ENCODE measurements at regions of chr7 and their contacts with region 1.

Region 1: DNA sequence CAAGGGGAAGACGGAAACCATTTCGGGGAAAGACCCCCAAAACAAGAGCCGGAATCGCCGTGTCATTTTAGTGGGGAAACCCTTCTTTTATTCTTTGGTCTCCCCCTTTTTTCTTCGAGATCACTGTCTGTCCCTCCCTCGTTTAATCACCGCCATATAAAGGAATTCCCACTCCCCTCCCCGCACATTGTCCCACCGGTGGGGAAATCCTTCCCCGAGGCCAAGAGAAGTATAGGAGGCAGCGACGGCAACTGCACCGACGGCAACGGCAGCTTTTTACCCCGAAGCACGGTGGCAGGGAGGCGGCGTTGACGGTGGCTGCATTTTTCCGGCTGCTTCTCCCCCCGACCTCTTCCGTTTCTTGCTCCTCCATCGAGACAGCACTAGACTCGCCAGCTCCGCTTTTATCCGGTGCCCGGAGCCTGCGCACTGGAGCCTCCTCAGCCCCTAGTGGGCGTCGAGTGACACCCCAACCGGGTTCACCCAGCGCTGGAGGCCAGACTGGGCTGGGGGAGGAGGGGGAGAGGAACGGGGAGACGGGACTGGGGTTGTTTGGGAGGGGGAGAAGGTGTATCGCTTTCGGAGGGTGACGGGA is 687 bp upstream of the KMT2E start:
- DNase-seq: peak; percentile 95
- ATAC-seq: peak; percentile 57
- H3K4me3 ChIP-seq: peak overlapping the region; percentile 95 to 99 (median 97)
- H3K4me3 Mint-ChIP-seq: peak overlapping the region; percentile 99
- H3K27ac ChIP-seq: peak overlapping the region; percentile 100
- H3K27ac Mint-ChIP-seq: peak overlapping the region; percentile 100
- H3K4me1 ChIP-seq: peaks cover 33 to 52% of the 10 kb centered on the region in 2 donors
- H3K4me1 Mint-ChIP-seq: peaks cover 56% of the 10 kb centered on the region
- H3K27me3 ChIP-seq: no peaks in the 10 kb centered on the region
- H3K27me3 Mint-ChIP-seq: no peaks in the 10 kb centered on the region
- CTCF ChIP-seq: peak; percentile 59

Region 2: GRCh38 chr7:104908636-104909035 is 104.7 kb before region 1 on chr7:
- CTCF ChIA-PET with region 1: no interaction called
- POLR2A ChIA-PET with region 1: no interaction called
- intact Hi-C with region 1: no loop called
- DNase-seq: no peak
- ATAC-seq: no peak
- H3K4me3 ChIP-seq: no peak overlapping the region
- H3K4me3 Mint-ChIP-seq: no peak overlapping the region
- H3K27ac ChIP-seq: no peak overlapping the region
- H3K27ac Mint-ChIP-seq: no peak overlapping the region
- H3K4me1 ChIP-seq: no peaks in the 10 kb centered on the region
- H3K4me1 Mint-ChIP-seq: no peaks in the 10 kb centered on the region
- H3K27me3 ChIP-seq: peaks cover 0 to 5% (median 3%) of the 10 kb centered on the region in 4 experiments
- H3K27me3 Mint-ChIP-seq: peaks cover 12% of the 10 kb centered on the region
- CTCF ChIP-seq: no peak

Region 3: DNA sequence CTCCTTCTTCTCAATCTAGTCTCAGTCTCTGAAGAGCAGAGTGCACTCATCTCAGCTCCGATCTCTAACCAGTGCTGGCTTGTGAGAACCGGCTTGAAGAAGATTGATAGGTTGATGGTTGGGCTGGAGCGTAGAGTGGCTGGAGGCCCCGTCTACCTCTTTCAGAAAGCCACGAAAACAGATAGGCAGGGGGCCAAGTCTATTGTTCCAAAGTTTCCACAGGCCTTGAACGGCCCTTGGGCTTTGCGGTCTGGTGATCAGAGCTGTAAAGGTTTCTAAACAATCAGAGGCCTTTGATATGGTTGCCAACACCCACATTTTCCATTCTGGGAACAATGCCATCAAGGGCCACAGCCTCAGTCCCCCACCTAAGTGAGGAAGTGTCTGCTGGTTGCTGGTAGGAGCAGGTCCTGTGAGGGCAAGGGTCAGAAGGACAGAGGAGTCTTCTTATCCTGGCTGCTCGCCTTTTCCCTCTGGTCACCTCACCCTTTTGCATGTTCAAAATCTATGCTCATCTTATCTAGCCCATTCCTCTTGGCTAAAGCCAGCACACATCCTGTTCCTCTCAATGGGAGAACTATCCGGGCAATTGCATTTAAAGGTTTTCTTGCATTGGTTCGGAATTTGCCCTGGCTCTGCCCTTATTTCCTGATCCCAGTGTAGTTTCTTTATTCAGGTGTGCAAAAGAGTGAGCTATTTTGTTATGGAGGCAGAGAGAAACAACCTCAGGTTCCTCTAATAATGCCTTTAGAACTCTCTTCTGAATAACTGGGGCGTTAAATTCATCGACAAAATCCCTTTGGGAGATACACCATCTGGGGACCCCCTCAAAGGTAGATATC is 69.6 kb before region 1 on chr7:
- CTCF ChIA-PET with region 1: interaction called, 5 read pairs
- POLR2A ChIA-PET with region 1: interaction called, 99 read pairs
- intact Hi-C with region 1: loop called (anchors 1 kb)
- DNase-seq: peak; percentile 73
- ATAC-seq: peak; percentile 18
- H3K4me3 ChIP-seq: peak overlapping the region; percentile 68 to 83 (median 76)
- H3K4me3 Mint-ChIP-seq: peak overlapping the region; percentile 93
- H3K27ac ChIP-seq: peak overlapping the region; percentile 99
- H3K27ac Mint-ChIP-seq: peak overlapping the region; percentile 100
- H3K4me1 ChIP-seq: peaks cover 66 to 78% of the 10 kb centered on the region in 2 donors
- H3K4me1 Mint-ChIP-seq: peaks cover 70% of the 10 kb centered on the region
- H3K27me3 ChIP-seq: no peaks in the 10 kb centered on the region
- H3K27me3 Mint-ChIP-seq: no peaks in the 10 kb centered on the region
- CTCF ChIP-seq: no peak

Region 4: DNA sequence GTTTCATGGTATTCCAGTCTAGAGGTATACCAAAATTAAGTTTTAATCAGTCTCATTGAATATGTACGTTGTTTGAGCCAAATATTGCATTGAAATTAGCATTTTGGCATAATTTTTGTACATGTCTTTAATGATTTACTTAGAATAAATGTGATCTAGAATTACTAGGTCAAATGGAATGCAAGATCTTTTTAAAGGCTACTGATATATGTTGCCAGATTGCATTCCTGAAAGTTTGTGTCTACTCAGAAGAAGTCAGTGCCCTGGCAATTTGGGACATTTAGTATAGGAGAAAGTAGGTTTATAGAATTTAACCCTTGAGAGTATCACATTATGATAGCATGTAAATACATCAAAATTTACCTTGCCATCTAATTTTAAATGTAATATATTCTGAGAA is 33.1 kb after region 1 on chr7:
- CTCF ChIA-PET with region 1: interaction called, 27 read pairs
- POLR2A ChIA-PET with region 1: interaction called, 5 read pairs
- intact Hi-C with region 1: no loop called
- DNase-seq: no peak
- ATAC-seq: no peak
- H3K4me3 ChIP-seq: no peak overlapping the region
- H3K4me3 Mint-ChIP-seq: no peak overlapping the region
- H3K27ac ChIP-seq: no peak overlapping the region
- H3K27ac Mint-ChIP-seq: no peak overlapping the region
- H3K4me1 ChIP-seq: peaks cover 5 to 6% of the 10 kb centered on the region in 2 donors
- H3K4me1 Mint-ChIP-seq: peaks cover 26% of the 10 kb centered on the region
- H3K27me3 ChIP-seq: no peaks in the 10 kb centered on the region
- H3K27me3 Mint-ChIP-seq: no peaks in the 10 kb centered on the region
- CTCF ChIP-seq: no peak

Region 5: DNA sequence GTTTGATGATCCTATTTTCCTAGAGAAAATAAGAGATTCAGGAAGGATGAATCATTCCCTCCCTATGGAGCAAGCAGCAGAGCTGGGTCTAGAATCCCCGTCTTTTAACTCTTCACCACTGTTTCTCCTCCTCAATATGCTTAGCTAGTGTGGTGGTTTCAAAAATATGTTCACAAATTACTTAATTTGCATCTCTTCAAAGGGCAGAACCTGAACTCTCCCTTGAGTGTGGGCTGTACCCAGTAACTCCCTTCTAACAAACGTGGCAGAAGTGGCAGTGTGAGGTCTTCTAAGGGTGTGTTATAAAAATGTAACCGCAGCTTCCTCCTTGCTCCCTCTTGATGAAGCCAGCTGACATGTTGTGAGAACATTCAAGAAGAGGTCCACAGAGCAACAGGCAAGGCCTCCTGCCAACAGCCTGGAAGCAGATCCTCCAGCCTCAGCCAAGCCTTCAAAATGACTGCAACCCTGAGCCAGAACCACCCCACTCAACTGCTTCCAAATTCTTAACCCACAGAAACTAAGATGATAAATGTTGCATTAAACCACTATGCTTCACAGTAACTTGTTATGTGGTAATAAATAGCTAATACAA is 338.8 kb after region 1 on chr7:
- CTCF ChIA-PET with region 1: no interaction called
- POLR2A ChIA-PET with region 1: interaction called, 7 read pairs
- intact Hi-C with region 1: loop called (anchors 5 kb)
- DNase-seq: peak; percentile 90
- ATAC-seq: peak; percentile 88
- H3K4me3 ChIP-seq: peak overlapping the region; percentile 0 to 41 (median 32)
- H3K4me3 Mint-ChIP-seq: peak overlapping the region; percentile 82
- H3K27ac ChIP-seq: peak overlapping the region; percentile 75 to 80
- H3K27ac Mint-ChIP-seq: peak overlapping the region; percentile 99
- H3K4me1 ChIP-seq: peaks cover 84 to 91% of the 10 kb centered on the region in 2 donors
- H3K4me1 Mint-ChIP-seq: peaks cover 64% of the 10 kb centered on the region
- H3K27me3 ChIP-seq: no peaks in the 10 kb centered on the region
- H3K27me3 Mint-ChIP-seq: no peaks in the 10 kb centered on the region
- CTCF ChIP-seq: no peak

Region 6: DNA sequence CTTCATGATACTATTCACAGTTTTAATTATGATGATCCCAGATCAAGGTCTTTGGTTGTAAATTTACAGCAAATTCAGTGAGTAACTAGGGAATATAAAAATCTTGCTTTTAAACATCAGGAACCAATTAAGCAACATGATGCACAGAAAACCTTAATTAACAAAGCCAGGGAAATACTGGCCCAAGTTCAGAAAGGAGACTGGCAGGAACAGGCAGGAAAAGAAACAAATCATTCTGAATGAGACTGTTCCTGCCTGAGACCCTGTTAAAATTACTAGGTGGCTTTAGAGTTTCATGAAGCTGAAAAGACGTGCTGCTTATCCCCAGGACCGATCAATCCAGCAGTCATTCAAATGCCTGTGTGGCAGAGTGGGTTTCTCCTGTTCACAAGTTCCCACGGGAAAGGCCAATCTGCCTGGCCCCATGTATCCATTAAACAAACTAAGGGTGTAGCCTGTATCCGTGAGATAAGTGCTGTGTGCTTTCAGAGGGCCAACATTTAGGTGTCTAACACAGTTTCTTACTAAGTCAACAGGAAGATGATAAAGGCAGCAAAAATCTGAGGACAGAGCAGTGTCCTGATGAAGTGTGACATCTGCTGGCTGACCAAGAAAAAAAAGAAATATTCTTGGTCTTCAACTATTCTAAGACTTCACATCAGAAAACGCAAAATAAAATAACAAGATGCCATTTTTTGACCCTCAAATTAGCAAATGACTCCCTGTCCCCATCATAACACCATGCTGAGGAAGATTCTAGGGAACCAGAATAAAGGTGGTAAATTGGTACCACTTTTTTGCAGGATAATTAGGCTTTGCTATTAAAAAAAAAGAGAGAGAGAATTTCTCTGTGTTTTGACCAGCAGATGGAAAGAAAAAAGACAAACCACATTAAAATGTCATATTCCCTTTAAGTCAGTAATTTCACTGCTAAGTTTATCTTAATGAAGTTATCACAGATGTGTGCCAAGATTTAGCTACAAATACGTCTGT is 474.6 kb after region 1 on chr7:
- CTCF ChIA-PET with region 1: no interaction called
- POLR2A ChIA-PET with region 1: no interaction called
- intact Hi-C with region 1: no loop called
- DNase-seq: peak; percentile 59
- ATAC-seq: peak; percentile 24
- H3K4me3 ChIP-seq: no peak overlapping the region
- H3K4me3 Mint-ChIP-seq: no peak overlapping the region
- H3K27ac ChIP-seq: no peak overlapping the region
- H3K27ac Mint-ChIP-seq: peak overlapping the region; percentile 61
- H3K4me1 ChIP-seq: peaks cover 0 to 3% of the 10 kb centered on the region in 2 donors
- H3K4me1 Mint-ChIP-seq: peaks cover 5% of the 10 kb centered on the region
- H3K27me3 ChIP-seq: no peaks in the 10 kb centered on the region
- H3K27me3 Mint-ChIP-seq: no peaks in the 10 kb centered on the region
- CTCF ChIP-seq: peak; percentile 75

Region 7: DNA sequence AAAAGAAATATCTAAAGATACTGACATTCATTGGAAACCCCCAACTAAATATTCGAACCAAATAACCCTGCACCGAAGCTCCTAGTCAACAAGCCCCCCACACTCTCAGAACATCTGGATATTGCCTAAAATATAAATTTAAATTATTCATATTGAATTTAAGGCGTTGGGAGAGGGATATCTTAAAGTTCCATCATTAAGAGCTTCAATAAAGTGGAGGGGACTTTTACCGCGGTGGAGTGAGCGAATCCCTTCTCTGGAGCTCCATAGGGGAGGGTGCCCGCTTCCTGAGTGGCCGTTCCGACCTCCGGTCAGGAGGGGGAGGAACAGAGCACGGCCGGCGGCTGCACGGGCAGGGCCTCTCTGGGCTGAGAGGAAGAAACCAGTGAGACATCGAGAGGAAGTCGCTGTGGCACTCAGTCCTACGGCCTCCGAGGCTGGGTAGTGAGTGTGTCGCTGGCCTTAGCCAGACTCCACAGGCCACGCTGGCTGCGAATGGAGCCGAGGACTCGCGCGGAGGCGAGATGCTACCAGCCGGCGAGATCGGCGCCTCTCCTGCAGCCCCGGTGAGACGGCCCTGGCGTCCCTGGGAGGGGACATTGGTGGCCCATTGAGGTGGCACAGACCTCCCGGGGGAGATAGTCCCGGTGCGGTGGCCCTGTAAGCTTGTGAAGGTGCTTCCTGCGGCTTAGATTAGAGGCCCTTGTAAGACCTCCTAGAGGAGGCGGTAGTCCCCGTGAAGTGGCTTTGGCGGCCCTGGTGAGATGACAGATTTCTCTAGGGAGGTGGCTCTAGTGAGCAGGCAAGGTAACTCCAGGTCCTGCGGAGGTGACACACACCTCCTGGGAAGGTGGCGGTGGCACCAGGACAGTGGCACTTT is 518.7 kb after region 1 on chr7 and contains the start of gene RINT1:
- CTCF ChIA-PET with region 1: interaction called, 3 read pairs
- POLR2A ChIA-PET with region 1: interaction called, 3 read pairs
- intact Hi-C with region 1: loop called (anchors 5 kb)
- DNase-seq: peak; percentile 95
- ATAC-seq: peak; percentile 97
- H3K4me3 ChIP-seq: peak within 1 kb of the TSS; percentile 81 to 98 (median 88)
- H3K4me3 Mint-ChIP-seq: peak within 1 kb of the TSS; percentile 92
- H3K27ac ChIP-seq: peak within 1 kb of the TSS; percentile 74 to 91
- H3K27ac Mint-ChIP-seq: peak within 1 kb of the TSS; percentile 97
- H3K4me1 ChIP-seq: peaks cover 18 to 22% of the 10 kb centered on the region in 2 donors
- H3K4me1 Mint-ChIP-seq: peaks cover 24% of the 10 kb centered on the region
- H3K27me3 ChIP-seq: no peaks in the 10 kb centered on the region
- H3K27me3 Mint-ChIP-seq: no peaks in the 10 kb centered on the region
- CTCF ChIP-seq: peak; percentile 84
- total RNA-seq, gene RINT1: 27.2 and 28.0 TPM in 2 replicates

Region 8: DNA sequence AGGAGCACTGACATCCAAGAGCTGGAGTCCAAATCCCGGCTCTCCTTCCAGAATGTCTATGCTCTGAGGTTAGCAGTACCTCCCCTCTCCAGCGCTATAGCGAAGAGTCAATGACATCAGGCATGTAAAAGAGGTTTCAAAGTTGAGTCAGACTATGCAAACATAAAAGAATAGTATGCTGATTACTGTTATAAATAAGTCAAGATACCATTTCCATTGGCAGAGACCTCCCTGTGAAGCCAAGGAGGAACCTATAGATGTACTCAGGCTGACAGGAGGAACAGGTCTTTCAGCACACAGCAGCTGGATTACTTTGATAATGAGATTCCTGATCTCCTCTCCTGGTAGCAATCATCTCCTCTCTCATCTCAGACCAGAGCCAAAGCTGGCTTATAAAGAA is 671.8 kb after region 1 on chr7:
- CTCF ChIA-PET with region 1: no interaction called
- POLR2A ChIA-PET with region 1: no interaction called
- intact Hi-C with region 1: no loop called
- DNase-seq: no peak
- ATAC-seq: no peak
- H3K4me3 ChIP-seq: no peak overlapping the region
- H3K4me3 Mint-ChIP-seq: no peak overlapping the region
- H3K27ac ChIP-seq: no peak overlapping the region
- H3K27ac Mint-ChIP-seq: no peak overlapping the region
- H3K4me1 ChIP-seq: peaks cover 0 to 4% of the 10 kb centered on the region in 2 donors
- H3K4me1 Mint-ChIP-seq: peaks cover 24% of the 10 kb centered on the region
- H3K27me3 ChIP-seq: no peaks in the 10 kb centered on the region
- H3K27me3 Mint-ChIP-seq: no peaks in the 10 kb centered on the region
- CTCF ChIP-seq: no peak

Measured in B cell (primary cell).